ENCODE measurements at regions of chr11 and their contacts with region 1.

Region 1: GRCh38 chr11:111378861-111379601 is at the start of gene POU2AF1:
- DNase-seq: peak; percentile 95
- H3K4me3 ChIP-seq: peak within 1 kb of the TSS; percentile 92
- H3K27ac ChIP-seq: peak within 1 kb of the TSS; percentile 96
- H3K4me1 ChIP-seq: peaks cover 74% of the 10 kb centered on the region
- CTCF ChIP-seq: no peak
- total RNA-seq, gene POU2AF1: 56.4 and 86.1 TPM in 2 replicates

Region 2: DNA sequence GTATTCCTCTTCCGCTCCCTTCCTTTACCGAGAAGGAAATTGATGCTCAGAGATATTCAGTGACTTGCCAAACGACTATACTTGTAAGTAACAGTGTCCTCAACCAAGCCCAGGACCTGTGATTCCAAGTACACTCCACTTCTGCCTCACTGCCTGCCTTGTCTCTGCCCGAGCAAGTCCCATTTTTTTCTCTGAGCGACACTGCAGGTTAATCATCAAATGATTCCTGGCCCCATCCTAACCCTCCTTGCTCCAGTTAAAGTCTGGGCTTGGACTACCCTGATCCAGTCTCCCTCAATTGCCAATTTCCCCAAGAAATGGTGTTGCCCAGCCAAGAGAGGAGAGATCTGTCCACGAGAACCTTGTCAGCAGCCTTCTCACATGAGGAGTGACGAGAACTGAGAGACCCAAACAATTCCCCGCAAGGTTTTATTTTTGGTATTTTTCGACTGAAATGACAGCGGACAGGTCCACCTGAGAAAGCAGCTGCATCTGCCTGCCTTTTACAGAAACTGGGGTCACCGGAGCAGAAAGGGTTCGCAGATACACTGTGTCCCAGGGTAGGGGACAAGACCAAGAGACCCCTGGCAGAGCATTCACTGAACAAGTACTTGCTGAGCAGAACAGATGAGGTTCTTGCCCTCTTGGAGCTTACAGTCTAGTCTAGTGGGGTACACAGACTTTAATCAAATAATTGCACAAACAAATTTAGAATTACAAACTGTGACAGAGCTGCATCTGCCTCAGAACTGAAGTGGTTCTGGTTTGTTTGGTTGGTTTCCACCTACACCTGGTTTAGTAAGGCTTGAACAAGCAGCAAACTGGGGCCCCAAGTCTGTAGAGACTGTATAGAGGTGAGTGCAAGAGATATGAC is 11.4 kb before region 1 on chr11:
- CTCF ChIA-PET with region 1: interaction called, 9 read pairs
- POLR2A ChIA-PET with region 1: interaction called, 101 read pairs
- intact Hi-C with region 1: loop called (anchors 1 kb)
- DNase-seq: peak; percentile 77
- H3K4me3 ChIP-seq: peak overlapping the region; percentile 39
- H3K27ac ChIP-seq: peak overlapping the region; percentile 73
- H3K4me1 ChIP-seq: peaks cover 100% of the 10 kb centered on the region
- CTCF ChIP-seq: no peak

Region 3: DNA sequence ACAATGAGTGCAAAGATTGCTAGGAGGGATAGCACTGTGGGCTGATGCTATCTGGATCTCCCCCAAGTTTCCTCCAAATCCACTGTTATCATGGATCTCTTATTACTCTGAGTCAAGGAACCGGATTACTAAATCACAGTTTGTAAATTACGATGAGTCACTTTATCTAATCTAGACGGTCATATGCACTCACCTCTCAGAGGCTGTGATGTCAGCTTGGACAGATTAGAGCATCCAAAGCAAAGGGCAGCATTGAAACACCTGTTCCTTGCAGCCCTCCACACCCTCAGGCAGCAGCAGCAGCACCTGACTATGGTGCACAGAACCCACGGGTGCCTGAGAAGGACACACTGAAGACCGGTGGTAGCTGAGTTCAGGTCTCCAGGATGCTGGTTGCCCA is 14.1 kb after region 1 on chr11:
- CTCF ChIA-PET with region 1: interaction called, 5 read pairs
- POLR2A ChIA-PET with region 1: interaction called, 83 read pairs
- intact Hi-C with region 1: loop called (anchors 1 kb)
- DNase-seq: no peak
- H3K4me3 ChIP-seq: no peak overlapping the region
- H3K27ac ChIP-seq: no peak overlapping the region
- H3K4me1 ChIP-seq: peaks cover 80% of the 10 kb centered on the region
- CTCF ChIP-seq: no peak

Region 4: GRCh38 chr11:111399187-111400031 is 20.4 kb after region 1 on chr11:
- CTCF ChIA-PET with region 1: interaction called, 7 read pairs
- POLR2A ChIA-PET with region 1: interaction called, 83 read pairs
- intact Hi-C with region 1: loop called (anchors 1 kb)
- DNase-seq: peak; percentile 72
- H3K4me3 ChIP-seq: peak overlapping the region; percentile 47
- H3K27ac ChIP-seq: peak overlapping the region; percentile 90
- H3K4me1 ChIP-seq: peaks cover 73% of the 10 kb centered on the region
- CTCF ChIP-seq: peak; percentile 79

Region 5: DNA sequence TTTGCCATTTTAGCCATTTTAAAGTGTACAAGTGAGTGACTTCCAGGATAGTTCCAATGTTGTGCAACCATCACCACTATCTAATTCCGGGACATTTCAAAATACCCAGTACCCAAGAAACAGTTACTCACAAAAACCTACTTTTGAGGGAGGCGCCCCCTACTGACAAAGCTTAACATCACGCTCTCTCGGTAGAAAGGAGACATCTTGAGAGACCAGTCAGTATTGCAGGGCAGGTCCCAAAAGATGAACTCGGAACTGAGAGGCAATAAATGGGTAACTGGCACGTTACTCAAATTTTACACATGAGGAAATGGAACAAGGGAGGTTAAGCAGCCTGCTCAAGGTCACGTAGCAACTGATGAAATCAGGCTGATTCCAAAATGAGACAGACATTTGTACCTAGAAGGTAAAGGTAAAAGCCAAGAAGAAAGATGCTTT is 50.1 kb after region 1 on chr11:
- CTCF ChIA-PET with region 1: interaction called, 4 read pairs
- POLR2A ChIA-PET with region 1: interaction called, 577 read pairs
- intact Hi-C with region 1: no loop called
- DNase-seq: peak; percentile 85
- H3K4me3 ChIP-seq: no peak overlapping the region
- H3K27ac ChIP-seq: no peak overlapping the region
- H3K4me1 ChIP-seq: peaks cover 26% of the 10 kb centered on the region
- CTCF ChIP-seq: peak; percentile 100

Region 6: GRCh38 chr11:111870886-111871692 is 492.1 kb after region 1 on chr11 and contains the start of gene ALG9:
- CTCF ChIA-PET with region 1: no interaction called
- POLR2A ChIA-PET with region 1: no interaction called
- intact Hi-C with region 1: no loop called
- DNase-seq: peak; percentile 79
- H3K4me3 ChIP-seq: peak within 1 kb of the TSS; percentile 79
- H3K27ac ChIP-seq: peak within 1 kb of the TSS; percentile 12
- H3K4me1 ChIP-seq: peaks cover 16% of the 10 kb centered on the region
- CTCF ChIP-seq: peak; percentile 43; the same call in 1 of the 2 replicates
- total RNA-seq, gene ALG9: 13.8 and 16.8 TPM in 2 replicates

Measured in OCI-LY7 (cell line).